Activated T-helper 1 cell treated with anti-CD3 and anti-CD28 coated beads, Interleukin-12 subunit alpha, Interleukin-12 subunit beta, Interleukin-2, Interleukin-4 antibody, amounts not matched to agents 30 ng/mL and 10 ng/mL and 1 ng/mL, durations not matched to agents 14 hours and 24 hours and 36 hours (primary cell): ENCODE measurements at regions of chr11 and their contacts with region 1.

Region 1: DNA sequence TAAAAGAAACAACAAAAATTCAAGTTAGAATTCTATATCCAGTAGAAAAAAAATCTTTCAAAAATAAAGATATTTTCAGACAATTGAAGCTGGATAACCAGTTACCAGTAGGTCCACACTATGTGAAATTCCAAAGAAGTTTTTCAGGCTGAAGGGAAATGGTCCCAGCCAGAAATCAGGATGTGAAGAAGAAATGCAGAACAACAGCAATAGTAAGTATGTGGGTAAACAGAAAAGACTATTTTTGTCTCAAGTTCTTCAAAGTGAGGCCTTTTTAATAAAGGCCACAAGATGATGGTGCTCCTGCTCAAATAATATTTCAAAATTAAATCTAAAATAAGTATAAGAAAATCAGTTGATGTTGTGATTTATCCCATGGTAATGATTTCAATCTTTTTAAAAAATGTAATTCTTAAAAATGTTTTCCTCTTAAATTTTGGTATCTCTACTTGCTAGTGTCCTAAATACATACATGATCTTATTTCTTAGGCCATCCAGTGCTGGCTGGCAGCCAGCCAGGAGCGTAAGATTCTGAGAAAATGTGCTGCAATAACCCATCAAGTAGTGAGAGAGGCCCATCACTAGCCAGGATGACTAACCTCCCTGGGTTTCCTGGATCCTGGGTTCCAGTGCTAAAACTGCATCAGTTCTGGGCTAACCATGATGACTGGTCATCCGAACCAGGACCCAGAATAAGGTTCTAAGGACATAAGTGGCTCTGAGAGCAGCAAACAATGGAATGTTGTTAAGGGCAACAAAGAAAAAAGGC is 15.6 kb upstream of the UCP3 start:
- DNase-seq: no peak
- H3K4me3 Mint-ChIP-seq: no peak overlapping the region
- H3K27ac Mint-ChIP-seq: peak overlapping the region; percentile 59
- H3K4me1 Mint-ChIP-seq: peaks cover 46% of the 10 kb centered on the region
- H3K27me3 Mint-ChIP-seq: no peaks in the 10 kb centered on the region

Region 2: DNA sequence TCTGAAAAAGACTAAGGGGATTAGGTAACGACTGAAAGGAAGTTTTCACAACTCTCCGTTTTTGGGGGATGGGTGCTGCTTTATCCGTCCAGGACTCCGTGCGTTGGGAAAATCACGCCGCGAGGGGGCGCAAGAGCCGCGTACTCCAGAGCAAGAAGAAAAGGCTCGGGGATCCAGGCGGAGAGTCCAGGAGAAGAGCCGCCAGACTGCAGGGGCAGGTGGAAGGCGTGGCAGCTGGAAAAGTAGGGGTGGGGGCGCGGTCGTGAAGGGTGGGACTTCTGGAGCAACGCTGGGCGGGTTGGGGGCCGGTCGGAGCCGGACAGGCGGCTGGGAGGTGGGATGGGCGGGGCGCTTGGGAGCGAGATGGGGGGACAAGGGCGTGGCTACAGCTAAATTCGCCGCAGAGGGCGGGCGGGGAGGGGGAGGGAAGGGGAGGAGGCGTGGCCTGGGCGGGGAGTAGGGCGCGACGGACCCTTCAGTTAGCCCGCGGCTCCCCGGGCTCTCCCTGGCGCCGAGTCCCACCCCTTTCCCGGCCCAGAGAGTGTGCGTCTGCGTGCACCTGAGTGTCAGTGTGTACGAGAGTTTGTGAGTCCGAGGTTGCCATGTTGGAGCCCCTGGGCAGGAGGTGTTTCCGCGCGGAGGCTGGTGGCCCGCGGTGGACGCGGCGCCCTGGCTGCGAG is 717.0 kb before region 1 on chr11:
- intact Hi-C with region 1: no loop called
- DNase-seq: peak; percentile 78
- H3K4me3 Mint-ChIP-seq: peak overlapping the region; percentile 87
- H3K27ac Mint-ChIP-seq: no peak overlapping the region
- H3K4me1 Mint-ChIP-seq: peaks cover 12% of the 10 kb centered on the region
- H3K27me3 Mint-ChIP-seq: peaks cover 39% of the 10 kb centered on the region

Region 3: DNA sequence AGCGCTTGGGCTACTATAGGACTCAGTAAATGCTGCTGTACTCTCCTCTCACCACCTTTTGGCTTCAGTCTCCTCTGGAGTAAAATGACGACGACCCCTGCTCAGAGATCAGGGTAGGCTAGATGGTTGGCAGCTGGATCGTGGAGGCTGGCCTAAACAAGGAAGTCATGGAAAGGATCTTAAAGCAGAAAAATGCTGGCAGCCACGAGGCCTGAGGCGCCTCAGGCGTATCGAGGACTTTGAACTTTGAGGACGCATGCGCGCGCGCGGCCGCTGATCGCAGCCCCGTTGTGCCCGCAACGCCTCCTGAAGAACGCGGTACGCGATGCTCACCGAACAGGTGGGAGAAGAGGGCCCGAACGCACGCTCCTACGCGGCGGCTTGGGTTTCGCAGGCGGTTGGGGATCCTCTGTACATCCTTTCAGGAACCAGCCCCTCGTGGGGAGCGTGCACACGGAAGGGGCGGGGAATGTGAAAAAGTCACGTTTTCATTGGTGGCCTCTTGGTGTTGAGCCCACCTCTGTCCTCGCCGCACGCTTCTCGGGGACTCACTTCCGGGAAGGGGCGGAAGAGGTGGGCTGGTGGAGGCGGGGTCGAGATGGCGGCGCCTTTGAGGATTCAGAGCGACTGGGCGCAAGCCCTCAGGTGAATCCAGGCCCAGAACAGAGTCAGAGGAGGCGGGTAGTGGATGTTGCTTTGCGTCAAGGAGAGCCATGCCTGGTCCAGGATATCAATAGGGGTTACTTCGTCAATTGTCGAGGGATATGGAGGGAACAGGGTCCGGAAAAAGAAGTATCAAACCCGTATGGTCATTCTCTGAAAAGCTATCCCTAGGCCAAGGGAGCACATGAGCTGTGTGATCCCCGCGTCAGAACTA is 147.8 kb before region 1 on chr11 and contains the starts of genes COA4 and PAAF1:
- intact Hi-C with region 1: no loop called
- DNase-seq: peak; percentile 92
- H3K4me3 Mint-ChIP-seq: peak within 1 kb of the TSS; percentile 93
- H3K27ac Mint-ChIP-seq: peak within 1 kb of the TSS; percentile 100
- H3K4me1 Mint-ChIP-seq: peaks cover 30% of the 10 kb centered on the region
- H3K27me3 Mint-ChIP-seq: no peaks in the 10 kb centered on the region
- total RNA-seq, gene COA4: 99.1 and 102 TPM in 2 replicates
- total RNA-seq, gene PAAF1: 22.4 and 25.0 TPM in 2 replicates

Region 4: DNA sequence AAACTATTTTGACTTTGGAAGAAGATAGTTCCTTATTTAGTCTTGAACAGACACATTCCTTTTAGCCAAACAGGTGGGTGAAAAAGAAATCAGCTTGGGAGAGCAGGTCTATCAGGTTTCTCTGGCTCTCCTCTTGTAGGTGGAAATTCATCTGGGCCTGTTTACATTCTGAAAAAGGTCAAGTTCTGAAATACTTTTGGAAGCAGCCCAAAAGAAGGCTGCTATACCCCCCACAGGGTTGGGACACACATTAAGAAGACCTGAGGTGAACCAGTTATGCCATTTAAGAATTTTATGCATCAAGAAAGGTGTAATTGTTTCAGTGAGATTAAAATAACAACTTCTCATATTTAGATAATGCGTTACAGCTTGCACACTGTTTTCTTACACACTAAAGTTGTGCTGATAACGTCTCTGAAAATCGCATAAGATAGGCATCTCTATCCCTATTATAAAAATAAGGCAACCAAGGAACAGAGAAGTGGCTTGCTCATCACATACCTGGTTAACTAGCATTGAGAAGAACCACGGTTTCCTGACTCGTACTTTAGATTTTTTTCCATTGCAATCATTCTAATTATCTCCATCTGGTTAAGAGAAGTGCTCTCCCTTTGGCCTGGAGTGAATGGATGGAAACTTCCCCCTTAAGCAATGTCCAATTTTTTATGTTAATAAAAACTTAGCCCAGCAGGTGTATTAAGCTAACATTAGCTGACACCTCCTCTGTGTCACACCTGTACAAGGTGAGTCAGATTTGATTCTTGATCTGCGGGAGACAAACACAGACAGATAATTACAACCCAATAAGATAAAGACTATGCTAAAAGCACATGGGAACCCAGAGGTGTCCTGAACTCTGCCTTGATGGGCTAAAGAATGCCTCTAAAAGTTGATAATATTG is 45.0 kb after region 1 on chr11:
- intact Hi-C with region 1: no loop called
- DNase-seq: no peak
- H3K4me3 Mint-ChIP-seq: no peak overlapping the region
- H3K27ac Mint-ChIP-seq: no peak overlapping the region
- H3K4me1 Mint-ChIP-seq: peaks cover 14% of the 10 kb centered on the region
- H3K27me3 Mint-ChIP-seq: no peaks in the 10 kb centered on the region

Region 5: DNA sequence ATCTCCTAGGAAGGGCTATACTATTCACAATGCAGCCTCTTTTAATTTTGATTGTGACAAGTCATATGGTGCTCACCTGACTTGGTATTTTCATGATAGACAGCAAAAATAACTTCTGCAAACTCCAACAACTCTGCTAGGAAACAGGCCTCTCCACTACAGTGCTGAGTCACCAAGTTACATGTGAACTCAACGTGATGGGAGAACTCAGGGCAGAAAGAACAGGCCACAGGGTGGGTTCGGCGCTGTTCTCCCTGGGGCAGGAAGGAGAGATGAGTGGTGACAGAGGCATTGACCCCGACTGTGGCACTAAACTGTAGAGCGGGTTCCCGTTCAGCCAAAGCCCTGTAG is 61.1 kb after region 1 on chr11:
- intact Hi-C with region 1: loop called (anchors 5 kb)
- DNase-seq: no peak
- H3K4me3 Mint-ChIP-seq: no peak overlapping the region
- H3K27ac Mint-ChIP-seq: no peak overlapping the region
- H3K4me1 Mint-ChIP-seq: no peaks in the 10 kb centered on the region
- H3K27me3 Mint-ChIP-seq: no peaks in the 10 kb centered on the region

Region 6: DNA sequence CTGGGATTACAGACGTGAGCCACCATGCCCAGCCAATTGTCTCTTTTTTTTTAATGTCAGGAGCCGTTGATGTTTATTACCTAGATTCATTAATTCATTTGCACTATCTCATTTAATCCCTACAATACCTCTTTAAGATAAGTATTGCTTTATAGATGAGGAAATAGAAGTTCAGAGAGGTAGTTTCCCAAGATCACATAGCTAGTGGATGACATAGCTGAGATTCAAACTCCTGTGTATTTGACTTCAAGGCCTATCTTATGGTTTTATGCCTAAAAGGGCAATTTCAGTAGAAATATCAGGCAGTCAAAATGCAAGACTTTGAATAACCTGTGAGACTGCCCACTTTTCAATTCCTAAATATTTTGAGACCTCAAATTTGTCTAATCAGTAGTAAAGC is 213.1 kb after region 1 on chr11:
- intact Hi-C with region 1: loop called (anchors 5 kb)
- DNase-seq: no peak
- H3K4me3 Mint-ChIP-seq: no peak overlapping the region
- H3K27ac Mint-ChIP-seq: no peak overlapping the region
- H3K4me1 Mint-ChIP-seq: no peaks in the 10 kb centered on the region
- H3K27me3 Mint-ChIP-seq: no peaks in the 10 kb centered on the region